ENCODE measurements at regions of chr12 and their contacts with region 1.

Region 1: GRCh38 chr12:42482445-42483237 is 106.9 kb downstream of the PRICKLE1 start:
- DNase-seq: peak in 1 of 2 donors; percentile 84
- H3K4me3 ChIP-seq: peak overlapping the region; percentile 58 to 76
- H3K27ac ChIP-seq: peak overlapping the region; percentile 93
- H3K4me1 ChIP-seq: peaks cover 27% of the 10 kb centered on the region
- H3K27me3 ChIP-seq: no peaks in the 10 kb centered on the region
- CTCF ChIP-seq: peak; percentile 30 to 95 (median 84)
- POLR2A ChIP-seq: no peak

Region 2: DNA sequence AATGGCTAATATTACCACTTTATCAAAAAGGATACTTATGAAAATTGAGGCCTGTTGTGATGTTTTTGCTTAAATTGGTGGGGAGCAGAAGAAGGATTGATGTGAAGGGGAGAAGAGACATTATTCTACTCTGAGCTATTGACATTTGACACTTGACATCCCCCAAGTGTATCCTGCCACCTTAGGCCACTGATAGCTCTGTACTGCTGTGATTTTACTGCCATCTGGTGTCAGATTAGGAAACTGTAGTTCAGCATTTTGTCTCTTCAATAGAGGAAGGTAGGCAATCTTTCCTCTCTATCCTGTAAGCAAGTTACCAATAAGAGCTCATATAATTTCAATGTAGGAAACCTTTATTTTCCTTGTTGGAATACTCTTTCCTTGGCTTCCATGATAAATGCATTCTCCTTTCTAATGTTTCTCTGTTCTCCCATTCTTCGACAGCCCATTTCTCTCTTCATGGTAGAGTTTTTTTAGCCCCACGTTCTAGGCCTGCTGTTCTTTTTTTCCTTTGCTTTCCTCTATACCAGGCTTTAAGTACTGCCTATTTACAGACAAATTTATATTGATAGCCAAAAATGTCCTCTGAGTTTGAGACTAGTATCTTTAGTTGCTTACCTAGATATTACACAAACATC is 110.4 kb before region 1 on chr12:
- intact Hi-C with region 1: no loop called
- DNase-seq: no peak
- H3K4me3 ChIP-seq: no peak overlapping the region
- H3K27ac ChIP-seq: no peak overlapping the region
- H3K4me1 ChIP-seq: no peaks in the 10 kb centered on the region
- H3K27me3 ChIP-seq: no peaks in the 10 kb centered on the region
- CTCF ChIP-seq: peak in 2 of 3 experiments; percentile 27 to 48
- POLR2A ChIP-seq: no peak

Region 3: GRCh38 chr12:42421844-42422779 is 60.5 kb before region 1 on chr12:
- intact Hi-C with region 1: no loop called
- DNase-seq: no peak
- H3K4me3 ChIP-seq: no peak overlapping the region
- H3K27ac ChIP-seq: peak overlapping the region; percentile 24
- H3K4me1 ChIP-seq: peaks cover 6% of the 10 kb centered on the region
- H3K27me3 ChIP-seq: no peaks in the 10 kb centered on the region
- CTCF ChIP-seq: no peak
- POLR2A ChIP-seq: no peak

Region 4: GRCh38 chr12:42589465-42590329 is 107.1 kb after region 1 on chr12 and contains the start of gene PRICKLE1:
- intact Hi-C with region 1: loop called (anchors 10 kb)
- DNase-seq: no peak
- H3K4me3 ChIP-seq: peak within 1 kb of the TSS; percentile 88 to 93
- H3K27ac ChIP-seq: peak within 1 kb of the TSS; percentile 86
- H3K4me1 ChIP-seq: peaks cover 44% of the 10 kb centered on the region
- H3K27me3 ChIP-seq: no peaks in the 10 kb centered on the region
- CTCF ChIP-seq: no peak
- POLR2A ChIP-seq: peak in 1 of 2 donors; percentile 10
- total RNA-seq, gene PRICKLE1: 25.3 TPM

Region 5: DNA sequence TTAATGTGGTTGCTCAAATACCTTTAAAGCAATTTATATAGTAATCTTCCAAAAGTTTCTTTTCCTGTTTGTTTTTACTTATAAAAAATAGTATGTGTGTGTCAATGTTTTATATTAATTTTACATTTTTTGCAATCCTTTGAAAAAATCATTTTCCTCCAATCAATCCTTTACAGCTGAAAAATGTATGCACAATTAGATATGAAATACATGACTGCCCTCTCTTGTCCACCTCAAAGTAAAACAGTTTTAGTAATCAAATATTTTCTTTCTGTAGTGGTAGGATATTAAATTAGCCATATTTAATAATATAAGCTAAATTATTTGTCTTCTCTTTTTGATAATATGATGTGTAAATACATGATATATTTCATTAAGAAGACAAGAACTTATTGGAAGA is 799.5 kb after region 1 on chr12:
- intact Hi-C with region 1: loop called (anchors 10 kb)
- DNase-seq: no peak
- H3K4me3 ChIP-seq: no peak overlapping the region
- H3K27ac ChIP-seq: no peak overlapping the region
- H3K4me1 ChIP-seq: peaks cover 12% of the 10 kb centered on the region
- H3K27me3 ChIP-seq: no peaks in the 10 kb centered on the region
- CTCF ChIP-seq: no peak
- POLR2A ChIP-seq: no peak

Measured in vagina (tissue), 2 donors.